ENCODE measurements at regions of chr7 and their contacts with region 1.

Region 1: DNA sequence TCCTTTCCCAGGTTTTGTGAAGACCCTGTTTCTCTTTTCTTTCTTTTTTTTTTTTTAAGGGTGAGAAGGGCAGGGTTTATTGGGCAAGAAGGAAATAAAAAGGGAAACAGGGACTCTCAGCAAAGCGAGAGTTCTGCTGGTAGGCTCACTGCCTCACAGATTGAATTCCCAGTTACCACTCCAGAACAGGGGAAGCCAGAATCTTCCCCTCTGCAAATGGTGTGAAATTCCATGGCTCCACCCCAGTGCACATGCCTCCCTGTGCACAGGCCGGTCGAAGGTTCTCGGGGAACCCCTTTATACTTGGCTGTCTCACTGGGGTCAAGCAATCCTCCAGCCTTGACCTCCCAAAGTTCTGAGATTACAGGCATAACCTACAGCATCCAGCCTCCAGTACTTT is 10.5 kb upstream of the GUSB start:
- DNase-seq: no peak
- H3K4me3 ChIP-seq: no peak overlapping the region
- H3K27ac ChIP-seq: no peak overlapping the region
- H3K4me1 ChIP-seq: no peaks in the 10 kb centered on the region
- H3K27me3 ChIP-seq: no peaks in the 10 kb centered on the region
- CTCF ChIP-seq: no peak

Region 2: DNA sequence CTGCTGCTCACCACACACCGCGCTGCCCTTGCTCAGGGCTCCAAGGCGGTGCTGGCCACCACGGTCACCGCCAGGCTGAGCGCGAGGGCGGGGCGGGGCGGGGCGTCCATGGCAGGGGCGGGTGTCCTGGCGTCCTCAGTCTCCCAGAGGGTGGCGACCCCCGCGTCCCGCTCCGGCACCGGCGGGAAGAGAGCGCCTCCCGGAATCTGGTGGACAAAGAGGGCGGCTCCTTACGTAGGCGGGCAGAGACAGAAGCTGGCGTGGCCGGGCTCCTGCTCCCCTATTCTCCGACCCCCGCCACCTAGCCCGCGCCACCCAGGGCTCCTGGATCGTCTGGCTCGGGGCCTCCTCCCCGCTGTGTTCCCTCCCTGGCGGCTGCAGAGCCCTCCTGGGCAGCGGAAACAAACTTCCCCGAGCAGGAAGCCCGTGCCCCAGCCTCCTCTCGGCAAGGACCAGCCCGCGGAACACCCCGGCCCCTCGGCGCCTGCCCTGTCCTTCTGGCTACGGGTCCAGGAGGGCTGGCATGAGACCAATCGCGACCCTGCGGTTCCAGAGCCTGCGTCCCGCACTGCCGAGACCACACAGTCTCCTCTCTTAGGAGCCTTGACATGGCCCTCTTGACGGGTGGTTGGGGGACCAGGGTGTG is 752.7 kb before region 1 on chr7:
- CTCF ChIA-PET with region 1: no interaction called
- POLR2A ChIA-PET with region 1: no interaction called
- intact Hi-C with region 1: no loop called
- DNase-seq: peak; percentile 22
- H3K4me3 ChIP-seq: peak overlapping the region; percentile 46
- H3K27ac ChIP-seq: no peak overlapping the region
- H3K4me1 ChIP-seq: peaks cover 6% of the 10 kb centered on the region
- H3K27me3 ChIP-seq: no peaks in the 10 kb centered on the region
- CTCF ChIP-seq: no peak

Region 3: DNA sequence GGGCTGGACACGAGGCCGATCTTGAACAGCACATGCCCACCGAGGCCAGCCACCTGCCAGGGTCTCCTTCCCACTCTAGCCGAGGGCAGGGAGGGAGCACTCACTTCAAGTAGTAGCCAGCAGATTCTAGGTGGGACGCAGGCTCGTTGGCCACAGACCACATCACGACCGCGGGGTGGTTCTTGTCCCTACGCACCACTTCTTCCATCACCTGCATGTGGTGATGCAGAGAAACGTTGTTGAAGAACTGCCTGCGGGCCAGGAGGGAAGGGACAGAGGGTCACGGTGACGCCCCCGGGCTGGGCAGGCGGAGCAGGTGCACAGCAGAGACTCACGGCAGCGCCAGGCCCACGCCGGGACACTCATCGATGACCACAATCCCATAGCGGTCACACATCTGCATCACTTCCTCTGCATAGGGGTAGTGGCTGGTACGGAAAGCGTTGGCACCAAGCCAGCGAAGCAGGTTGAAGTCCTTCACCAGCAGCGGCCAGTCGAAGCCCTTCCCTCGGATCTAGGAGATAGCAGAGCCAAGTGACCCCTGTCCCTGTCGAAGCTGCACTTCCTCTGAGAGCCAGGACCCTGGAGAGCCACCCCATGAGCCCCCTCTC is 18.2 kb before region 1 on chr7:
- CTCF ChIA-PET with region 1: no interaction called
- POLR2A ChIA-PET with region 1: no interaction called
- intact Hi-C with region 1: no loop called
- DNase-seq: no peak
- H3K4me3 ChIP-seq: no peak overlapping the region
- H3K27ac ChIP-seq: no peak overlapping the region
- H3K4me1 ChIP-seq: no peaks in the 10 kb centered on the region
- H3K27me3 ChIP-seq: no peaks in the 10 kb centered on the region
- CTCF ChIP-seq: no peak

Region 4: DNA sequence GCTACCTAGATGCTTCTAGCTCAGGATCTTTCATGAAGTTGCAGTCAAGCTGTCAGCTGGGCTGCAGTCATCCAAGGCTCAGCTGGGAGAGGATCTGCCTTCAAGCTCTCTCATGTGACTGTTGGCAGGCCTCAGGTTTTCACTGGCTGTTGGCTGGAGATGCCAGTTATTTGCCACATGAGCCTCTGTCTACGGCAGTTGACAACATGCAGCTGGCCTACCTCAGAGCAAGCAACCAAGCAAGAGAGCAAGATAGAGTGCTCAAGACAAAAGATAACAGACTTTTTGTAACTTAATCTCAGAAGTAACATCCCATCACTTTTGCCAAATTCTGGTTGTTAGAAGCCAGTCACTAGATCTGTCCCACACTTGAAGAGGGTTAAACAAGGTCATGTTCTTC is 338.4 kb after region 1 on chr7:
- CTCF ChIA-PET with region 1: no interaction called
- POLR2A ChIA-PET with region 1: no interaction called
- intact Hi-C with region 1: no loop called
- DNase-seq: no peak
- H3K4me3 ChIP-seq: no peak overlapping the region
- H3K27ac ChIP-seq: no peak overlapping the region
- H3K4me1 ChIP-seq: no peaks in the 10 kb centered on the region
- H3K27me3 ChIP-seq: no peaks in the 10 kb centered on the region
- CTCF ChIP-seq: no peak

Region 5: GRCh38 chr7:66679633-66680244 is 687.2 kb after region 1 on chr7:
- CTCF ChIA-PET with region 1: no interaction called
- POLR2A ChIA-PET with region 1: interaction called, 12 read pairs
- intact Hi-C with region 1: no loop called
- DNase-seq: no peak
- H3K4me3 ChIP-seq: no peak overlapping the region
- H3K27ac ChIP-seq: no peak overlapping the region
- H3K4me1 ChIP-seq: peaks cover 5% of the 10 kb centered on the region
- H3K27me3 ChIP-seq: no peaks in the 10 kb centered on the region
- CTCF ChIP-seq: no peak